HCT116 (cell line): ENCODE measurements at regions of chr5 and their contacts with region 1.

Region 1: GRCh38 chr5:156815988-156816599 is 34.0 kb upstream of the PPP1R2B start:
- DNase-seq: no peak
- ATAC-seq: peak; percentile 67
- H3K4me3 ChIP-seq: no peak overlapping the region
- H3K27ac ChIP-seq: no peak overlapping the region
- H3K4me1 ChIP-seq: no peaks in the 10 kb centered on the region
- H3K27me3 ChIP-seq: no peaks in the 10 kb centered on the region
- CTCF ChIP-seq: peak; percentile 13 to 57 (median 47); a peak in 4 of 6 replicates
- POLR2A ChIP-seq: no peak
- RAD21 ChIP-seq: peak; percentile 48

Region 2: GRCh38 chr5:155136216-155136850 is 1679.8 kb before region 1 on chr5:
- CTCF ChIA-PET with region 1: no interaction called
- POLR2A ChIA-PET with region 1: no interaction called
- RAD21 ChIA-PET with region 1: no interaction called
- intact Hi-C with region 1: loop called (anchors 2 kb)
- DNase-seq: no peak
- ATAC-seq: no peak
- H3K4me3 ChIP-seq: no peak overlapping the region
- H3K27ac ChIP-seq: no peak overlapping the region
- H3K4me1 ChIP-seq: no peaks in the 10 kb centered on the region; a peak in 1 of 4 replicates
- H3K27me3 ChIP-seq: peaks cover 47% of the 10 kb centered on the region
- CTCF ChIP-seq: no peak
- POLR2A ChIP-seq: no peak
- RAD21 ChIP-seq: no peak

Region 3: GRCh38 chr5:155616779-155617392 is 1199.2 kb before region 1 on chr5:
- CTCF ChIA-PET with region 1: no interaction called
- POLR2A ChIA-PET with region 1: no interaction called
- RAD21 ChIA-PET with region 1: no interaction called
- intact Hi-C with region 1: loop called (anchors 2 kb)
- DNase-seq: no peak
- ATAC-seq: no peak; the same call in 1 of the 2 replicates
- H3K4me3 ChIP-seq: no peak overlapping the region
- H3K27ac ChIP-seq: no peak overlapping the region
- H3K4me1 ChIP-seq: no peaks in the 10 kb centered on the region
- H3K27me3 ChIP-seq: no peaks in the 10 kb centered on the region
- CTCF ChIP-seq: peak; percentile 11 to 66 (median 65); a peak in 5 of 6 replicates
- POLR2A ChIP-seq: no peak
- RAD21 ChIP-seq: peak; percentile 60

Region 4: GRCh38 chr5:155943516-155944407 is 872.3 kb before region 1 on chr5:
- CTCF ChIA-PET with region 1: interaction called, 4 read pairs
- POLR2A ChIA-PET with region 1: no interaction called
- RAD21 ChIA-PET with region 1: no interaction called
- intact Hi-C with region 1: loop called (anchors 2 kb)
- DNase-seq: no peak
- ATAC-seq: no peak
- H3K4me3 ChIP-seq: no peak overlapping the region
- H3K27ac ChIP-seq: no peak overlapping the region
- H3K4me1 ChIP-seq: no peaks in the 10 kb centered on the region
- H3K27me3 ChIP-seq: no peaks in the 10 kb centered on the region
- CTCF ChIP-seq: peak in 2 of 3 experiments; percentile 34 to 50; a peak in 2 of 6 replicates
- POLR2A ChIP-seq: no peak
- RAD21 ChIP-seq: peak; percentile 31; the same call in 1 of the 2 replicates